ENCODE measurements at regions of chr10 and their contacts with region 1.

Region 1: DNA sequence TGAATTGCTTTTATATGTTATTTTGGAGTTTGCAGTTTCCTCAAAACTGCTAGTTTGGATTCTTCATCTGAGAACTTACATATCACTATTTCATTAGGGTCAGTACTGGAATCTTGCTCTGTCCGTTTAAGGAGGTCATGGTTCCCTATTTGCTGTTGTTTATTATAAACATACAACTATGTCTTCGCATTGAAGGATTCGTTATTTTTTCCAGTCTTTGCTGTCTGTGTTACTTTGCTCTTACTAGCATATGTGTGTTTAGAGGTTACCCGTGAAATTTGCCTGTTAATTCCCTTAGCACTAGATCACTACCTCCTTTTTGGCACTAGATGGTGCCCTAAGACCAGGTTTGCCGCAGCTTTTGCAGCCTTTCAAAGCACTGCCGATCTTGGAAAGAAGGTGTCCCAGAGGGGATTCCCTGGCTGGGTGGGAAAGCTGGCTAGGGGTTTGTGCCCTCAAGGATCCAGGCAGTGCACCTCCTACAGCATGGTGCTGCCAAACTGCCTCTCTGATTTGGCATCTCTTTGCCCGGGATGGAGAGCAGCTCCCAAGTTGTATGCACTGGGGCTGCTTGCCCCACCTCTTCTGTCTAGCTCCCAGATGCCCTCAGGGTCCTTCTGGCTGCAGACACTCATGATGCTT is 103.1 kb upstream of the APBB1IP start:
- DNase-seq: peak; percentile 34
- H3K4me3 ChIP-seq: no peak overlapping the region
- H3K27me3 ChIP-seq: peaks cover 2% of the 10 kb centered on the region; the same call in 1 of the 2 replicates
- CTCF ChIP-seq: peak; percentile 72

Region 2: GRCh38 chr10:26556748-26557640 is 221.9 kb after region 1 on chr10:
- CTCF ChIA-PET with region 1: interaction called, 50 read pairs
- POLR2A ChIA-PET with region 1: no interaction called
- DNase-seq: no peak
- H3K4me3 ChIP-seq: no peak overlapping the region
- H3K27me3 ChIP-seq: no peaks in the 10 kb centered on the region; the same call in 1 of the 2 replicates
- CTCF ChIP-seq: peak; percentile 89

Region 3: DNA sequence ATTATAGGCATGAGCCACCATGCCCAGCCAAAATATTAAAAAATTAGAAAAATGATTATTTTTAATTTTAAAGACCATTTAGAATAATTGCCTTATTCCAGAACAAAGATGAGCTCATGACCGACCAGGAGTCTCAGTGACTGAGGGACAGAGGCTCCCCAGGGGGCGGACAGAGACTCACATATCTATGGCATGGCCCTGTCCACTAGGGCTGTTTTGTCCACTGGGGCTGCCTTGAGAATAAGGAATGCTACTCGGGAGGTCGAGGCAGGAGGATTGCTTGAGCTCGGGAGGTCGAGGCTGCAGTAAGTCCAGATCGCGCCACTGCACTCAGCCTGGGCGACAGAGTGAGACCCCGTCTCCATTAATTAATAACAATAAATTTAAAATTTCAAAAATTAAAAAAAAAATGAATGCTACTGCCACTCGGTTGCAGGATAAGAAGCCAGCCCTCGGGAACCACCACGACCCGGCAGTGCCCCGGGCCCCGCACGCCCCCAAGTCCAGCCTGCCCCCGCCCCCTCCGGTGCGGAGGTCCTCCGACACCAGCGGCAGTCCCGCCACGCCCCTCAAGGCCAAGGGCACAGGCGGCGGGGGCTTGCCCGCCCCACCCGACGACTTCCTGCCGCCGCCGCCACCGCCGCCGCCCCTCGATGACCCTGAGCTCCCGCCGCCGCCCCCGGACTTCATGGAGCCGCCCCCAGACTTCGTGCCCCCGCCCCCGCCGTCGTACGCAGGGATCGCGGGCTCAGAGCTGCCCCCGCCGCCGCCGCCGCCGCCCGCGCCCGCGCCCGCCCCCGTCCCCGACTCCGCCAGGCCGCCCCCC is 231.7 kb after region 1 on chr10:
- CTCF ChIA-PET with region 1: interaction called, 10 read pairs
- POLR2A ChIA-PET with region 1: no interaction called
- DNase-seq: no peak
- H3K4me3 ChIP-seq: peak overlapping the region; percentile 32
- H3K27me3 ChIP-seq: no peaks in the 10 kb centered on the region
- CTCF ChIP-seq: 0 out of 2 replicates have a peak, but pooled peaks have one; percentile 8

Region 4: DNA sequence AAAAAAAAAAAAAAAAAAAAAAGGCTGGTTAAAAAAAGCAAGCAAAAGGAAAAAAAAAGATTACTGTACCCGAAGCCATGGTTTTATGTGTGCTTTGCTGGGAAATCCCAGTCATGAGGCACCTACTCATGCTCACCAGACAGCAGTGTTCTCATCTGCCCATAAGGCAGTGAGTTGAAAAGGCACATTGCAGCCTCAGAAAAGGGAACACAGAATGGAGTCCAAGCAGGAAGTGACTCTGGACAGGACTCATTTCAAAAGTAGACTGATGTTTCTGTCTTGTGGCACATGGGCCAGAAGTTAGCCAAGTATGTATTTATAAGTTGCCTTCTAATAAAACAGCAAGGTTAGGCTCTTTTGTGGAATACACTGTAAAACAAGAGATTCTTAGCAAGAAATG is 402.7 kb after region 1 on chr10:
- CTCF ChIA-PET with region 1: no interaction called
- POLR2A ChIA-PET with region 1: no interaction called
- DNase-seq: no peak
- H3K4me3 ChIP-seq: no peak overlapping the region
- H3K27me3 ChIP-seq: no peaks in the 10 kb centered on the region
- CTCF ChIP-seq: no peak